Activated CD4-positive, alpha-beta memory T cell treated with anti-CD3 and anti-CD28 coated beads for 36 hours (primary cell): ENCODE measurements at regions of chr7 and their contacts with region 1.

Region 1: DNA sequence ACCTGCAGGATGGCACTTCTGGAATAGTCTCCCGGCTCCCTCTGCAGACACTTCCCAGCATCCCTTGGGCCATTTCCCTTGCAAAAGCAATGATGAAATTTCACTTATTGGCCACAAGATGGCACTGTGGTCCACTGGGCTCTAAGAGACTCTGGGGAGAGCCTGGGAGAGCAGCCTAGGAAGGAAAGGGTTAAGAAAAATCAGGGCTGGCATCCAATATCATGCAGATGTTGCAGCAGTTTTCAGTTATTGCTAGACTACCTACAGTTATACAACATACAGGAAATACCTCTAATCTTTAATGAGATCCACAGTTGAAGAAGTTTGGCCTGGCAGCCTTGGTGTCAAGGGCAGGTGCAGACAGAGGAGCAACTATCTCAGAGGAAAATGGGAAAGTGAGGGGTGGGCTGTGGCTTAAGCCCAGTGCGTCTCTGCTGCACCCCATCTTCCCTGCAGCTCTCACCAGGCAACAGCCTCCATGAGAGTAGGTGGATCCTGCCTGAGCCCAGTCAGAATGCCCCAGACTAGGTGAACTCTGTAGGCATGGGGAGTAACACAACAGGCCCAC is 100.2 kb upstream of the PRSS58 start:
- DNase-seq: peak; percentile 46
- H3K4me3 Mint-ChIP-seq: peak overlapping the region; percentile 4
- H3K27ac Mint-ChIP-seq: no peak overlapping the region
- H3K4me1 Mint-ChIP-seq: peaks cover 36% of the 10 kb centered on the region
- H3K27me3 Mint-ChIP-seq: no peaks in the 10 kb centered on the region

Region 2: DNA sequence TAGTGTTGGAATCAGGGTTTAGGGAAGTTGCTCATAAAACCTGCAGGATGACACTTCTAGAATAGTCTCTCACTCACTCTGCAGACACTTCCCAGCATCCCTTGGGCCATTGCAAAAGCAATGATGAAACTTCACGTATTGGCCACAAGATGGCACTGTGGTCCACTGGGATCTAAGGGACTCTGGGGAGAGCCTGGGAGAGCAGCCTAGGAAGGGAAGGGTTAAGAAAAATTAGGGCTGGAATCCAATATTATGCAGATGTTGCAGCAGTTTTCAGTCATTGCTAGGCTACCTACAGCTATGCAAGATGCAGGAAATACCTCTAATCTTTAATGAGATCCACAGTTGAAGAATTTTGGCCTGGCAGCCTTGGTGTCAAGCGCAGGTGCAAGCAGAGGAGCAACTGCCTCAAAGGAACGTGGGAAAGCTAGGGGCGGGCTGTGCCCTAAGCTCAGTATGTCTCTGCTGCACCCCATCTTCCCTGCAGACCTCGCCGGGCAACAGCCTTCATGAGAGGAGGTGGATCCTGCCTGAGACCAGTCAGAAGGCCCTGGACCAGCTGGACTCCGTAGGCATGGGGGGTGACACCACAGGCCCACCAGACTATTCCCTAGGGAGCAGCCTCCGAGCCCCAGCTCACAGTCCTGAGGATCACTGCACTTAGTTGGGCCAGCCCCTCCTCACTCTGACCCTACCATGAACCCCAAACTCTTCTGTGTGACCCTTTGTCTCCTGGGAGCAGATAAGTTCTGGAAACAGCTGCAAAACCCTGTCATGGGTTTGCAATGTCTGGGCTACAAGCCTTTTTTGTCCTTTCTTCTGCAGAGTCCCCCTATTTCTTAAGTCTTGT is 27.7 kb after region 1 on chr7:
- CTCF ChIA-PET with region 1: interaction called, 26 read pairs
- POLR2A ChIA-PET with region 1: interaction called, 4 read pairs
- intact Hi-C with region 1: loop called (anchors 1 kb)
- DNase-seq: peak; percentile 69
- H3K4me3 Mint-ChIP-seq: peak overlapping the region; percentile 60
- H3K27ac Mint-ChIP-seq: peak overlapping the region; percentile 50
- H3K4me1 Mint-ChIP-seq: peaks cover 21% of the 10 kb centered on the region
- H3K27me3 Mint-ChIP-seq: no peaks in the 10 kb centered on the region

Region 3: DNA sequence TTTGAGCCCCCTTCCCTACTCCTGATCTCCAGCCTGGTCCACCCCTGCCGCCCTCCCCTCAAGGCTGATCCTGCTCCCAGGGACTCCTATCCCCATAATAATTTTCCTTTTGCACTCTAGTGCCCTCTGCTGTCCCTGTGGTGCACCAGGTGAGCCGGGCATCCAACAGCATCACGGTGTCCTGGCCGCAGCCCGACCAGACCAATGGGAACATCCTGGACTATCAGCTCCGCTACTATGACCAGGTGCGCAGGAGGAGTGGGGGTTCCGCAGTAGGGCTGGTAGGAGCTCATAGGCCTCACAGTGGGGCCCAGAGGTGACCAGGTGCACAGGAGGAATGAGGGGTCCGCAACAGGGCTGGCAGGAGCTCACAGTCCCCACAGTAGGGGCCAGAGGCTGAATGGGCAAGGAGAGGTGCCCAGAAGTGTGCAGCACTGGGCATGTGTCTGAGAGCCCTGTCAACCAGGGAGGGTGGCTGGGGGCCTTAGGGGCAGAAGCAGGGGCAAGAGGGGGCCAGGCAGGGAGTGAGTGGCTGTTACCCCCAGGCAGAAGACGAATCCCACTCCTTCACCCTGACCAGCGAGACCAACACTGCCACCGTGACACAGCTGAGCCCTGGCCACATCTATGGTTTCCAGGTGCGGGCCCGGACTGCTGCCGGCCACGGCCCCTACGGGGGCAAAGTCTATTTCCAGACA is 508.5 kb after region 1 on chr7:
- CTCF ChIA-PET with region 1: no interaction called
- POLR2A ChIA-PET with region 1: no interaction called
- intact Hi-C with region 1: no loop called
- DNase-seq: peak; percentile 36
- H3K4me3 Mint-ChIP-seq: no peak overlapping the region
- H3K27ac Mint-ChIP-seq: no peak overlapping the region
- H3K4me1 Mint-ChIP-seq: no peaks in the 10 kb centered on the region
- H3K27me3 Mint-ChIP-seq: no peaks in the 10 kb centered on the region